Ovary (tissue), 10 donors: ENCODE measurements at regions of chr18 and their contacts with region 1.

Region 1: DNA sequence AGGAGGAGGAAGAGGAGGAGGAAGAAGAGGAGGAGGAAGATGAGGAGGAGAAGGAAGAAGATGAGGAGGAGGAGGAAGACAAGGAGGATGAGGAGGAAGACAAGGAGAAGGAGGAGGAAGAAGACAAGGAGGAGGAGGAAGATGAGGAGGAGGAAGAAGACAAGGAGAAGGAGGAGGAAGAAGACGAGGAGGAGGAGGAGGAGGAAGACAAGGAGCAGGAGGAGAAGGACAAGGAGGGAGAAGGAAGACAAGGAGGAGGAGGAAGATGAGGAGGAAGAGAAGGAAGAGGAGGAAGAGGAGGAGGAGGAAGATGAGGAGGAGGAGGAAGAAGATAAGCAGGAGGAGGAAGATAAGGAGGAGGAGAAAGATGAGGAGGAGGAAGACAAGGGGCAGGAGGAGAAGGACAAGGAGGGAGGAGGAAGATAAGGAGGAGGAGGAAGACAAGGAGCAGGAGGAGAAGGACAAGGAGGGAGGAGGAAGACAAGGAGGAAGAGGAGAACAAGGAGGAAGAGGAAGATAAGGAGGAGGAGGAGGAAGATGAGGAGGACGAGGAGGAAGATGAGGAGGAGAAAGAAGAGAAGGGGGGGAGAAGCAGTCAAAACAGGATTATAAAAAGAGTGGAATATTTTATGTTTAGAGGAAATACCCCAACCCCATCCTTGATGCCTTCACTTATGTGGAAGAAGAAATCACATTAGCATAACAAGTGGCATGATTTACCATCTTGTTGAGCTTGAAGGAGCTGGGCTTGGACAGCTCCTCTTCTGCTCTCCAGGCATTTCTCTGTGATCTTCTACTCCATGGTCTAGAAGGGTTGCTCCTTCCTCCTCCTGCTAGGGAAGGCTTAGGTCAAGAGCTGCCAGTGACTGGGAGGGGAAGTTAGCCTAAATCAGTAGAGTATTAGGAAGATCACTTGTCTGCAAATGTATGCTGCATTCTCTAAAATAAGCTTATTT is 45.3 kb upstream of the KCTD1 start:
- DNase-seq: no peak
- H3K4me3 ChIP-seq: no peak overlapping the region
- H3K27ac ChIP-seq: no peak overlapping the region
- H3K4me1 ChIP-seq: no peaks in the 10 kb centered on the region
- H3K27me3 ChIP-seq: no peaks in the 10 kb centered on the region
- CTCF ChIP-seq: no peak
- EP300 ChIP-seq: no peak
- POLR2A ChIP-seq: no peak

Region 2: DNA sequence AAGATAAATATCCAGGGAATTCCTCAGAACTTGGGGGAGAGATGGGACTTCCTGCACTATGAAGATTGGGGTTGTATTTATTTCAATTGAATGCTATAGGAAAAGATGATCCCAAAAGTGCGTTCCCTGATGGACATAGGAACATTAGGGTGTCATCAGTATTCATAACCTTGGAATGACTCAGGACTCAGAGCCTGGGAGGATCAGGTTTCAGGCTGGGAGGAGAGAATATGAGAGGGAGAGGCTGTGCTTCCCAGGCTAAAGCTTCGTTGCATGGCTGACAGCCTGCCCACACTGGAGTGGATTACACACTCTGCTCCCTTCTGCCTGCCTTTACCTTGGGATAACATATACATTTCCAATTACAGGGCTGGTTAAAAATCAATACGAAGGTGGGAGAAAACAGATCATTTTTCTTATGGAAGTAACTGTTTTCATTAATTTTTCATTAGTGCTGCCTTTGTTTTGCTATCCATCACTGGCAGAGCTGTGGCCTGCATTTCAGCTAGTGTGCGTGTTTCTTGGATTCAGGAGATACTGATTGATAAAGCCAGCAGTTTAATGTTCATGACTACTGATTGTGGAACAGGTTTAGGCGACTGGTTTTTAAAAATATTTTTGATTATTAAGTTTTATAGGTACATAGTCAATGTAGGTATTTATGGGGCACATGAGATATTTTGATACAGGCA is 164.0 kb before region 1 on chr18:
- intact Hi-C with region 1: no loop called
- DNase-seq: no peak
- H3K4me3 ChIP-seq: no peak overlapping the region
- H3K27ac ChIP-seq: no peak overlapping the region
- H3K4me1 ChIP-seq: no peaks in the 10 kb centered on the region
- H3K27me3 ChIP-seq: no peaks in the 10 kb centered on the region
- CTCF ChIP-seq: no peak
- EP300 ChIP-seq: no peak
- POLR2A ChIP-seq: no peak

Region 3: DNA sequence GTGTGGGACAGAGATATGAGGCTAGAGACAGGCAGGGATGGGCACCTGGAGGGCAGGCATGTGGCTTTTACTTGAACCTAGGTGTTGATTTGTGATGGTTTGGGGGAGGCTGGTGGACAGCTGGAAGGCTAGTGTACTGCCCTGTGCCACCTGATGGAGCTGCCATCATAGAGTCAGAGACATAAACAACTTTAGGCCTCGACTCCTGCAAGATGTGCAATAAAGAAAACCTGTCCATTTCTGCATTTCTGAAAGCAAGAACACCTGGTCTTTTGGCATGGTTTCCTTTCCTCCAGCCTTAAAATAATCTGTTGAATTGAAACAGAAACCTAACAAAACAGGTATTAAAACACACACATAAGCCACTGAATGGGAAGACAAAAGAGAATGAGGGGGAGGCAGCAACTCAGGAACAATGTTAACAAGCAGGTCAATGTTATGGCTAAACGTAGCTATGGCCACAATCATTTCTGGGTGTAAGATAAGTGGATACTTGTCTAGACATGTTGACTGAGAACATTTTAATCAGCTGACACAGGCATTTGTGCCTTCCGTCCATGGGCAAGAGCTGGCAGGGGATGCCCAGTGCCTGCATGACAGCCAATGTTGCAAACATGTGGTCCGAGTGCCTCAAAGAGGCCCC is 133.1 kb before region 1 on chr18:
- intact Hi-C with region 1: loop called in 1 of 4 experiments (anchors 5 kb)
- DNase-seq: no peak
- H3K4me3 ChIP-seq: no peak overlapping the region
- H3K27ac ChIP-seq: no peak overlapping the region
- H3K4me1 ChIP-seq: no peaks in the 10 kb centered on the region
- H3K27me3 ChIP-seq: no peaks in the 10 kb centered on the region
- CTCF ChIP-seq: no peak
- EP300 ChIP-seq: no peak
- POLR2A ChIP-seq: no peak

Region 4: DNA sequence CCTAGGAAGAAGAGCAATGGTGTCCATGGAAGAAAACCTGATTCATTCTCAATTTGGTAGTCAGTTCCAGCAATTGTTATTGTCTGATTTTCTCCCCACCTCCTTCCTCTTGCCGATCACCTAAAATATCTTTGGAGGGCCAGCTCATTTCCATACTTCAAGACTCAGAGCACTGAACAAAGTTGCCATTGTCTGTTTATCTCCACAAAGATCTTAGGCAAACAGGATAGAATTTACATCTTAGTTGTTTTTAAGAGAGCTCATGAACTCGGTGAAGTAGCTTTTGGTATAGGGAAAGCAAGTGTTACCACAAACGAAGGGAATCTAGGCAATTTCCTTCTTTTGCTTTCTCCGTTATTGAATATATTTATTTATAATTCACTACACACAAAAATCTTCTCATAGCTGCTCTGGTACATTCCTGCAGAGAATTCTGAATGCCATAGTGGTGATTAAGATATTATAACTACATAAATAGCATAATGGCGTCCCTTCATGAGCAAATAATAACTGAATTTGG is 633.0 kb after region 1 on chr18:
- intact Hi-C with region 1: no loop called
- DNase-seq: no peak
- H3K4me3 ChIP-seq: no peak overlapping the region
- H3K27ac ChIP-seq: no peak overlapping the region
- H3K4me1 ChIP-seq: no peaks in the 10 kb centered on the region
- H3K27me3 ChIP-seq: no peaks in the 10 kb centered on the region
- CTCF ChIP-seq: no peak
- EP300 ChIP-seq: no peak
- POLR2A ChIP-seq: no peak